ENCODE measurements at regions of chr5 and their contacts with region 1.

Region 1: GRCh38 chr5:150846654-150847333 is 473 bp downstream of the IRGM start:
- DNase-seq: peak; percentile 22 to 91 (median 44)
- ATAC-seq: peak; percentile 92
- H3K4me3 ChIP-seq: peak overlapping the region; percentile 48
- H3K4me3 Mint-ChIP-seq: peak overlapping the region; percentile 87
- H3K27ac ChIP-seq: peak overlapping the region in 1 of 2 donors; percentile 31
- H3K27ac Mint-ChIP-seq: peak overlapping the region; percentile 87
- H3K4me1 ChIP-seq: peaks cover 17% of the 10 kb centered on the region
- H3K4me1 Mint-ChIP-seq: peaks cover 31% of the 10 kb centered on the region
- H3K27me3 ChIP-seq: no peaks in the 10 kb centered on the region
- H3K27me3 Mint-ChIP-seq: no peaks in the 10 kb centered on the region
- CTCF ChIP-seq: peak; percentile 84

Region 2: GRCh38 chr5:150458819-150459557 is 387.8 kb before region 1 on chr5:
- CTCF ChIA-PET with region 1: interaction called, 3 read pairs
- POLR2A ChIA-PET with region 1: interaction called, 6 read pairs
- intact Hi-C with region 1: loop called (anchors 1 kb)
- DNase-seq: peak; percentile 78 to 93 (median 87)
- ATAC-seq: peak; percentile 91
- H3K4me3 ChIP-seq: no peak overlapping the region
- H3K4me3 Mint-ChIP-seq: no peak overlapping the region
- H3K27ac ChIP-seq: no peak overlapping the region
- H3K27ac Mint-ChIP-seq: peak overlapping the region; percentile 61
- H3K4me1 ChIP-seq: peaks cover 37% of the 10 kb centered on the region
- H3K4me1 Mint-ChIP-seq: peaks cover 45% of the 10 kb centered on the region
- H3K27me3 ChIP-seq: no peaks in the 10 kb centered on the region
- H3K27me3 Mint-ChIP-seq: no peaks in the 10 kb centered on the region
- CTCF ChIP-seq: peak; percentile 80

Region 3: DNA sequence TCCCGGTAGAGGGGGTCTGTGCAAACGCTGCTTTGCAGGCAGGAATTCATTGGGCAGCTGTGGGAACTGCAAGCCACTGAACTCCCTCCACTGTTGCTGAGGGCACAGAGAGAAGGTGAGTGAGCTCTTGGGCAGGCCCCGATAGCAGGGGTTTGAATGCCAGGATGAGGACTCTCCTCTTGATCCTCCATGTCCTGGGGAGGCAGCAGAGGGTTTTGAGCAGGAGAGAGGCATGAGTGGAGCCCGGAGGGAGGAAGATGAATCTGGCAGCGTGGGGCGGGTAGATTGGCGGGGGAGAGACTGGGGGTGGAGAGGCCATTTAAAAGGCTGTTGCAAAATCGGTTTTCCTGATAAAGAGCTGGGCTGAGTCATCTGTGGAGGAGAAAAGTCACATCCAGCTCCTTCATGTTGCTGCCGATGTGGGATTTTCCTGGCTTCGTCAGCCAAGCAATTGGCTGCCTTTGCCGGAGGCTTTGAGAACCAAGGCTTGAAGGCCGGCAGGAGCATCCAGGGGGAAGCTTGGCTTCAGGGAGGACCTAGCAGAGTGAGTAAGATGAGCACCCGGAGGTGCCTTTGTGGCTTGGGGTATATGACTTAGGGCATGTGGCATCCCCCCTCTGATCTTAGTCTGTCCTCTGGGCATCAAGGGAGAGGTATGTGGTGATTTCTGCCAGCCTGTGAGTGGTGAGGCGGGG is 206.3 kb before region 1 on chr5 and contains the start of gene SYNPO:
- CTCF ChIA-PET with region 1: no interaction called
- POLR2A ChIA-PET with region 1: no interaction called
- intact Hi-C with region 1: no loop called
- DNase-seq: no peak
- ATAC-seq: no peak
- H3K4me3 ChIP-seq: no peak within 1 kb of the TSS
- H3K4me3 Mint-ChIP-seq: no peak within 1 kb of the TSS
- H3K27ac ChIP-seq: no peak within 1 kb of the TSS
- H3K27ac Mint-ChIP-seq: no peak within 1 kb of the TSS
- H3K4me1 ChIP-seq: no peaks in the 10 kb centered on the region
- H3K4me1 Mint-ChIP-seq: no peaks in the 10 kb centered on the region
- H3K27me3 ChIP-seq: peaks cover 0 to 3% of the 10 kb centered on the region in 2 experiments
- H3K27me3 Mint-ChIP-seq: peaks cover 11% of the 10 kb centered on the region
- CTCF ChIP-seq: no peak
- total RNA-seq, gene SYNPO: 0.06 to 0.14 TPM

Region 4: DNA sequence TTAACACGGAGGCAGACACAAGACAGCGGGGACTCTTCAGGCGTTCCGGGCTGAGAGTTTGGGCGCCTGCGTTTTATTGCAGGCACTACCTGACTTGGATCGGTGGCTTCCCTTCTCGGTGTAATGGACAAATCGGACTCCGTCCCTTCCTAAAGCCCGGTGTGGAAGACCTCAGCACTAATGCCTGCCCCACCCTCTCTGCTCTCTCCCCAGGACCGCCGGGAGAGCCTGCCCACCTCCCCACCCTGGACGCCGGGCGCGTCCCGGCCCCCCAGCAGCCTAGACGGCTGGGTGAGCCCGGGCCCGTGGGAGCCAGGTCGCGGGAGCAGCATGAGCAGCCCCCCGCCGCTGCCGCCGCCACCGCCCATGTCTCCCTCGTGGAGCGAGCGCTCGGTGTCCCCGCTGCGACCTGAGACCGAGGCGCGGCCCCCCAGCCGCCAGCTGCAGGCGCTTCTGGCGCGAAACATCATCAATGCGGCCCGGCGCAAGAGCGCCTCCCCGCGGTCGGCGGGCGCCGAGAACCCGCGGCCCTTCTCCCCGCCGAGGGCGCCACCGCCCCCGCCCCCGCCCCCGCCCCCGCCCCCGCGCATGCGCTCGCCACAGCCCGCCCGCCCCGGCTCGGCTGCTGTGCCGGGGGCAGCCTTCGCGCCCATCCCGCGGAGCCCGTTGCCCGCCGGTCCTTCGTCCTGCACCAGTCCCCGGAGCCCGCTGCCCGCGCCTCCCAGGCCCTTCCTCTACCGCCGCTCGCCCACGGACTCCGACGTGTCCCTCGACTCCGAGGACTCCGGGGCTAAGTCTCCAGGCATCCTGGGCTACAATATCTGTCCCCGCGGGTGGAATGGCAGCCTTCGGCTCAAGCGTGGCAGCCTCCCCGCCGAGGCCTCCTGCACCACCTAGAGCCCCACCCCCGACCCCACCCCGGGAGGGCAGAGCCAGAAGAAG is 190.3 kb before region 1 on chr5:
- CTCF ChIA-PET with region 1: no interaction called
- POLR2A ChIA-PET with region 1: interaction called, 3 read pairs
- intact Hi-C with region 1: loop called in 1 of 2 experiments (anchors 2 kb)
- DNase-seq: peak; percentile 67 to 92 (median 80)
- ATAC-seq: peak; percentile 94
- H3K4me3 ChIP-seq: peak overlapping the region; percentile 68
- H3K4me3 Mint-ChIP-seq: peak overlapping the region; percentile 85
- H3K27ac ChIP-seq: no peak overlapping the region
- H3K27ac Mint-ChIP-seq: no peak overlapping the region
- H3K4me1 ChIP-seq: peaks cover 15% of the 10 kb centered on the region
- H3K4me1 Mint-ChIP-seq: peaks cover 10% of the 10 kb centered on the region
- H3K27me3 ChIP-seq: no peaks in the 10 kb centered on the region
- H3K27me3 Mint-ChIP-seq: no peaks in the 10 kb centered on the region
- CTCF ChIP-seq: peak; percentile 47

Region 5: DNA sequence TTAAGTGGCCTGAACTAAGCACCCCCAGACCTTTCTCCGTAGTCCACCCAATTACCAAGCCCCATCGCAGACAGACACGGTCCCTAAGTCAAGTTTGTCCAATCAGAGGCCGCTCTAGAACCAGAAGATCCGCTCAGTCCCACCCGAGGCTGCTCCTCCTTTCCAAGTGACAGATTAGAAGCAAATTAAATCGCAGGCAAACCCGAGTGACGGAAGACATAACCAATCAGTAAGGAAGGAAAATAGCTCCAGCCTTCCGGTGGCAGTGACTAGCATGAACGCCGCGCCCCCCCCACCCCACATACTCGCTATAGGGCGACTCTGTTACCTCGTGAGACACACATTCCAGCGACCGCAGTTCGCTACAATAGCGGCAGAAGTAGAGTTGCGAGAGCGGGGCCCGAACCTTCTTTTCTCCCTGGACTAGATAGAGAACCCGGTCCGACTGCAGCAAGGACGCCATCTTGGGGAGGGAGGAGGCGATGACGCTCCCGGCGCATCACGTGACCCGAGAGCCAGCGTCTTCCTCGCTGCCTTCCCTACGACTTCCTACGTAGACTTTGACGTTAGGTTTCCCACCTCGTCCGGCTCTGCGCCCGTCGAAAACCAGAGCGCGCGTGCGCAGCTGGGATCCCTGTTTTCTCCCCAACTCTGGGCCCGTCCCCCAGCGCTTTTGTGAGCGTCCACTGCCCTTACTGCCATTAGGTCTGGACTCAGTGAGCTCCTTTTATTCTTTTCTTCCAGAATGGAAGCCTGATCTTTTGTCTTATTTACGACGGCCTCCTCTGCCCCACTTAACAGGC is 88.1 kb before region 1 on chr5 and contains the start of gene DCTN4:
- CTCF ChIA-PET with region 1: interaction called, 10 read pairs
- POLR2A ChIA-PET with region 1: interaction called, 9 read pairs
- intact Hi-C with region 1: loop called in 1 of 2 experiments (anchors 1 kb)
- DNase-seq: peak; percentile 82 to 99 (median 90)
- ATAC-seq: peak; percentile 92
- H3K4me3 ChIP-seq: peak within 1 kb of the TSS; percentile 69
- H3K4me3 Mint-ChIP-seq: no peak within 1 kb of the TSS
- H3K27ac ChIP-seq: peak within 1 kb of the TSS; percentile 96
- H3K27ac Mint-ChIP-seq: no peak within 1 kb of the TSS
- H3K4me1 ChIP-seq: peaks cover 24% of the 10 kb centered on the region
- H3K4me1 Mint-ChIP-seq: peaks cover 33% of the 10 kb centered on the region
- H3K27me3 ChIP-seq: no peaks in the 10 kb centered on the region
- H3K27me3 Mint-ChIP-seq: no peaks in the 10 kb centered on the region
- CTCF ChIP-seq: no peak
- total RNA-seq, gene DCTN4: 81.2 to 84.4 TPM

Region 6: GRCh38 chr5:150789943-150790611 is 56.7 kb before region 1 on chr5:
- CTCF ChIA-PET with region 1: interaction called, 24 read pairs
- POLR2A ChIA-PET with region 1: interaction called, 6 read pairs
- intact Hi-C with region 1: no loop called
- DNase-seq: peak; percentile 23 to 83 (median 52)
- ATAC-seq: peak; percentile 96
- H3K4me3 ChIP-seq: no peak overlapping the region
- H3K4me3 Mint-ChIP-seq: peak overlapping the region; percentile 59
- H3K27ac ChIP-seq: no peak overlapping the region
- H3K27ac Mint-ChIP-seq: peak overlapping the region; percentile 64
- H3K4me1 ChIP-seq: peaks cover 20% of the 10 kb centered on the region
- H3K4me1 Mint-ChIP-seq: peaks cover 55% of the 10 kb centered on the region
- H3K27me3 ChIP-seq: no peaks in the 10 kb centered on the region
- H3K27me3 Mint-ChIP-seq: no peaks in the 10 kb centered on the region
- CTCF ChIP-seq: no peak

Region 7: DNA sequence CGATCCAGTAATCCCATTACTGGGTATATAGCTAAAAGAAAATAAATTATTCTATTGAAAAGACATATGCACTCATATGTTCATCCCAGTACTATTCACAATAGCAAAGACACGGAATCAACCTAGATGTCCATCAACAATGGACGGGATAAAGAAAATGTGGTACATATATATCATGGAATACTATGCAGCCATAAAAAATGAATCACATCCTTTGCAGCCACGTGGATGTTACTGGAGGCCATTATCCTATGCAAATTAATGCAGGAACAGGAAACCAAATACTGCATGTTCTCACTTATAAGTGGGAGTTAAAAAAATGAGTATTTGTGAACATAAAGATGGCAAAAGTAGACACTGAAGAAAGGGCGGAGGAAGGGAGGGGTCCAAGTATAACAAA is 17.1 kb before region 1 on chr5:
- CTCF ChIA-PET with region 1: no interaction called
- POLR2A ChIA-PET with region 1: no interaction called
- intact Hi-C with region 1: no loop called
- DNase-seq: no peak
- ATAC-seq: no peak
- H3K4me3 ChIP-seq: no peak overlapping the region
- H3K4me3 Mint-ChIP-seq: no peak overlapping the region
- H3K27ac ChIP-seq: no peak overlapping the region
- H3K27ac Mint-ChIP-seq: no peak overlapping the region
- H3K4me1 ChIP-seq: no peaks in the 10 kb centered on the region
- H3K4me1 Mint-ChIP-seq: no peaks in the 10 kb centered on the region
- H3K27me3 ChIP-seq: no peaks in the 10 kb centered on the region
- H3K27me3 Mint-ChIP-seq: peaks cover 3% of the 10 kb centered on the region
- CTCF ChIP-seq: no peak

Measured in CD4-positive, alpha-beta T cell (primary cell).